HEK293T (cell line): ENCODE measurements at regions of chr18 and their contacts with region 1.

Region 1: GRCh38 chr18:31610286-31611205 is 18.9 kb downstream of the TTR start:
- DNase-seq: peak; percentile 78

Region 2: DNA sequence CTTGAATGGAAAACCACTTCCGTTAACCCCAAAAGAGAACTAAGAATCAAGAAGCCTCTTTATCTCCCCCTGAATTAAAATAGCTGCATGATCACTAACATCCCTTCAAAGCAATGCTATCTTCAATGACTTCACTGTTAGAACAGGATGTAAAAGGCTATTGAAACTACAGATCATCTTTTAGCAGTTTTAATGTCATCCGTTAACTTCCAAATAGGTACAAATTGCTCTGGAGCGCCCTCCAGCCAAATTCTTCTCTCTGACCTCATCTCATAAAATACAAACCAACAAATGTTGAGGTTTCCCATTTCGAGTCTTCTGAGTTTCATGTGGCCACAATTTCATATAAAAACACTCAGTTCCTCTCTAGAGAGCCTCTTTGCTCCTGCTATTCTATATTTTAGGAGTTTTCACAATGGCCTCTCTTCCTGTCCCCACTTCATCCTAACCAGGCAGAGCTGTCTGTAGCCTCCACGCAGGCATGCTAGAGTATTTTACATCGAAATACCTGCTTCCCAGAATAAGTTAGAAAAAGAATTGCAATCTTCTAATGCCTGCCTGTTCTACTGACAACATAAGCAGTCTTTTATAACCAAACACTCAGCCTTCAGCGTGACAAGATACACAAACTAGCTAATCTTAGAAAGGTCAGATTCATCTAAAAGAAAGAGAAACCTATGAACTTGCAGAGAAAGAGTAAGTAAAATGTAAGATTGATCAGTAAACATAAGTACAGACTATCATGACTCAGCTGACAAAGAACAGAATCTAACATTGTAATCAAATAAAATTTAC is 36.0 kb after region 1 on chr18:
- CTCF ChIA-PET with region 1: interaction called, 10 read pairs
- POLR2A ChIA-PET with region 1: no interaction called
- DNase-seq: no peak

Region 3: DNA sequence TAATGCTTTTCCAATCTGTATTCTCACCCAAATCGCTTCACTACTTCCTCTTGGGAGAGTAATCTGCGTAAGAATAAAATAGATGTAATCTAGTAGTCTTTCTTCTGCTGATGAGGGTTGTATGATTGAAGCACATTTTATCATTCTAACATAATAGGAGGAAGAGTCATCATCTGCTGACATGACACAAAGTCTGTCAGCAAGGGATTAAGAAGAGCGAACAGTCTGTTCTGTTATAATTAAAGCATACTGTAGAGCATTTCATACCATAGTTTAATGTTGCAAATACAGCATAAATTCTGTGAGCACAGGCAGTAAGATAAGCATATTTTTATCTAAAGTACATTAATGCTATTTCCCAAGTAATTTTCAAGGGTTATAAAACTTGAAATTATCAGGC is 139.7 kb after region 1 on chr18:
- CTCF ChIA-PET with region 1: no interaction called
- POLR2A ChIA-PET with region 1: no interaction called
- DNase-seq: no peak